ENCODE measurements at regions of chr2 and their contacts with region 1.

Region 1: GRCh38 chr2:42360890-42361727 is at the start of gene COX7A2L:
- DNase-seq: peak; percentile 96 to 97 (median 97)
- H3K4me3 ChIP-seq: peak within 1 kb of the TSS; percentile 84 to 97
- H3K4me3 Mint-ChIP-seq: peak within 1 kb of the TSS; percentile 89 to 97 (median 94)
- H3K27ac ChIP-seq: peak within 1 kb of the TSS; percentile 93
- H3K27ac Mint-ChIP-seq: peak within 1 kb of the TSS; percentile 96 to 100 (median 98)
- H3K4me1 ChIP-seq: peaks cover 47% of the 10 kb centered on the region
- H3K4me1 Mint-ChIP-seq: peaks cover 37 to 56% (median 48%) of the 10 kb centered on the region in 4 donors
- H3K27me3 ChIP-seq: no peaks in the 10 kb centered on the region
- H3K27me3 Mint-ChIP-seq: no peaks in the 10 kb centered on the region
- total RNA-seq, gene COX7A2L: 77.2 to 77.7 TPM

Region 2: GRCh38 chr2:41840702-41841551 is 520.2 kb before region 1 on chr2:
- CTCF ChIA-PET with region 1: interaction called, 3 read pairs
- POLR2A ChIA-PET with region 1: interaction called, 5 read pairs
- intact Hi-C with region 1: loop called (anchors 1 kb)
- DNase-seq: peak; percentile 97 to 98 (median 97)
- H3K4me3 ChIP-seq: peak overlapping the region; percentile 85 to 86
- H3K4me3 Mint-ChIP-seq: peak overlapping the region; percentile 90 to 100 (median 96)
- H3K27ac ChIP-seq: peak overlapping the region; percentile 75
- H3K27ac Mint-ChIP-seq: peak overlapping the region; percentile 85 to 98 (median 94)
- H3K4me1 ChIP-seq: peaks cover 10% of the 10 kb centered on the region
- H3K4me1 Mint-ChIP-seq: peaks cover 5 to 16% (median 11%) of the 10 kb centered on the region in 4 donors
- H3K27me3 ChIP-seq: peaks cover 3% of the 10 kb centered on the region
- H3K27me3 Mint-ChIP-seq: peaks cover 11 to 16% of the 10 kb centered on the region in 2 donors

Region 3: GRCh38 chr2:42169100-42169873 is 191.8 kb before region 1 on chr2 and contains the start of gene EML4:
- CTCF ChIA-PET with region 1: no interaction called
- POLR2A ChIA-PET with region 1: interaction called, 12 read pairs
- intact Hi-C with region 1: loop called (anchors 1 kb)
- DNase-seq: peak; percentile 82 to 94 (median 89)
- H3K4me3 ChIP-seq: peak within 1 kb of the TSS; percentile 71 to 81
- H3K4me3 Mint-ChIP-seq: peak within 1 kb of the TSS in 5 of 8 donors; percentile 48 to 71 (median 65)
- H3K27ac ChIP-seq: peak within 1 kb of the TSS; percentile 95
- H3K27ac Mint-ChIP-seq: peak within 1 kb of the TSS in 3 of 7 donors; percentile 84 to 95 (median 94)
- H3K4me1 ChIP-seq: peaks cover 29% of the 10 kb centered on the region
- H3K4me1 Mint-ChIP-seq: peaks cover 0 to 28% (median 14%) of the 10 kb centered on the region in 4 donors
- H3K27me3 ChIP-seq: no peaks in the 10 kb centered on the region
- H3K27me3 Mint-ChIP-seq: no peaks in the 10 kb centered on the region
- total RNA-seq, gene EML4: 168 to 172 TPM

Region 4: GRCh38 chr2:42328148-42328833 is 32.8 kb before region 1 on chr2:
- CTCF ChIA-PET with region 1: interaction called, 6 read pairs
- POLR2A ChIA-PET with region 1: interaction called, 4 read pairs
- intact Hi-C with region 1: loop called (anchors 2 kb)
- DNase-seq: peak in 4 of 5 donors; percentile 31 to 37 (median 33)
- H3K4me3 ChIP-seq: no peak overlapping the region
- H3K4me3 Mint-ChIP-seq: no peak overlapping the region
- H3K27ac ChIP-seq: no peak overlapping the region
- H3K27ac Mint-ChIP-seq: peak overlapping the region; percentile 0 to 85 (median 62)
- H3K4me1 ChIP-seq: no peaks in the 10 kb centered on the region
- H3K4me1 Mint-ChIP-seq: peaks cover 2 to 9% (median 5%) of the 10 kb centered on the region in 4 donors
- H3K27me3 ChIP-seq: no peaks in the 10 kb centered on the region
- H3K27me3 Mint-ChIP-seq: no peaks in the 10 kb centered on the region

Region 5: GRCh38 chr2:42663106-42663780 is 302.1 kb after region 1 on chr2:
- CTCF ChIA-PET with region 1: no interaction called
- POLR2A ChIA-PET with region 1: interaction called, 4 read pairs
- intact Hi-C with region 1: loop called (anchors 2 kb)
- DNase-seq: peak; percentile 52 to 60 (median 56)
- H3K4me3 ChIP-seq: no peak overlapping the region
- H3K4me3 Mint-ChIP-seq: no peak overlapping the region
- H3K27ac ChIP-seq: no peak overlapping the region
- H3K27ac Mint-ChIP-seq: peak overlapping the region in 1 of 7 donors; percentile 14
- H3K4me1 ChIP-seq: no peaks in the 10 kb centered on the region
- H3K4me1 Mint-ChIP-seq: peaks cover 0 to 4% (median 1%) of the 10 kb centered on the region in 4 donors
- H3K27me3 ChIP-seq: no peaks in the 10 kb centered on the region
- H3K27me3 Mint-ChIP-seq: no peaks in the 10 kb centered on the region

Region 6: GRCh38 chr2:44167940-44168680 is 1807.0 kb after region 1 on chr2:
- CTCF ChIA-PET with region 1: no interaction called
- POLR2A ChIA-PET with region 1: no interaction called
- intact Hi-C with region 1: loop called (anchors 5 kb)
- DNase-seq: peak; percentile 96 to 100 (median 99)
- H3K4me3 ChIP-seq: peak overlapping the region; percentile 81 to 99
- H3K4me3 Mint-ChIP-seq: peak overlapping the region; percentile 96 to 100 (median 100)
- H3K27ac ChIP-seq: peak overlapping the region; percentile 98
- H3K27ac Mint-ChIP-seq: peak overlapping the region; percentile 97 to 100 (median 100)
- H3K4me1 ChIP-seq: peaks cover 37% of the 10 kb centered on the region
- H3K4me1 Mint-ChIP-seq: peaks cover 19 to 44% (median 35%) of the 10 kb centered on the region in 4 donors
- H3K27me3 ChIP-seq: no peaks in the 10 kb centered on the region
- H3K27me3 Mint-ChIP-seq: no peaks in the 10 kb centered on the region